ENCODE measurements at regions of chr2 and their contacts with region 1.

Region 1: GRCh38 chr2:62410015-62410453 is 96.0 kb downstream of the TMEM17 start:
- DNase-seq: no peak
- H3K4me3 ChIP-seq: no peak overlapping the region
- H3K27ac ChIP-seq: peak overlapping the region; percentile 22 to 90
- H3K4me1 ChIP-seq: peaks cover 0 to 19% of the 10 kb centered on the region in 2 donors
- H3K27me3 ChIP-seq: no peaks in the 10 kb centered on the region
- CTCF ChIP-seq: no peak

Region 2: GRCh38 chr2:61922714-61923113 is 487.3 kb before region 1 on chr2:
- intact Hi-C with region 1: loop called (anchors 1 kb)
- DNase-seq: no peak
- H3K4me3 ChIP-seq: no peak overlapping the region
- H3K27ac ChIP-seq: no peak overlapping the region
- H3K4me1 ChIP-seq: peaks cover 0 to 26% of the 10 kb centered on the region in 2 donors
- H3K27me3 ChIP-seq: no peaks in the 10 kb centered on the region
- CTCF ChIP-seq: no peak

Region 3: DNA sequence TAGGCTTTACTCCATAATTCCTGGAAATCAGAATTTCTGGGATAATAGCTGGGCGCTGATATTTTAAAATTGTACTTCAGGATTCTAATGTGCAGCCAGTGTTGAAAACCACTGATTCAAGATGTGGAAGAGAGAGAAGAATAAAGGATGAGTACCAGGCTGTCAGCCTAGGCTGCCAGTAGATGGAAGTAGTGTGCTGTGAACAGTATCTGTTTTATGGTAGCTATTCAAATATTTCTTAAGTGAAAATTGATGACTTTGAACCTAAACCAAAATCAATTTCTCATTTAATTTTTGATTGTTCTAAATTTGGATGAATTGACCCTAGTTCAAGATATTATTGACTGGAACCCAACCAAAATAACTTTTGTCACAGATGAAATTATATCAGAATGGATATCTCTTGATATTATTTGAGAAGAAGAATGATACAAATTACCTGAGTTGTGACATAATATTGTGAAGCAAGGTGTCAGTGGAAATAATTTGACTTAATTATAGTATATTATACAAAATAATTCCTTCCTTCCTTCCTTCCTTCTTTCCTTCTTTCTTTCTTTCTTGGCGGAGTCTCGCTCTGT is 416.5 kb before region 1 on chr2:
- intact Hi-C with region 1: loop called (anchors 1 kb)
- DNase-seq: no peak
- H3K4me3 ChIP-seq: no peak overlapping the region
- H3K27ac ChIP-seq: no peak overlapping the region
- H3K4me1 ChIP-seq: no peaks in the 10 kb centered on the region
- H3K27me3 ChIP-seq: no peaks in the 10 kb centered on the region
- CTCF ChIP-seq: peak; percentile 40 to 59 (median 43)